T-cell (primary cell): ENCODE measurements at regions of chr12 and their contacts with region 1.

Region 1: DNA sequence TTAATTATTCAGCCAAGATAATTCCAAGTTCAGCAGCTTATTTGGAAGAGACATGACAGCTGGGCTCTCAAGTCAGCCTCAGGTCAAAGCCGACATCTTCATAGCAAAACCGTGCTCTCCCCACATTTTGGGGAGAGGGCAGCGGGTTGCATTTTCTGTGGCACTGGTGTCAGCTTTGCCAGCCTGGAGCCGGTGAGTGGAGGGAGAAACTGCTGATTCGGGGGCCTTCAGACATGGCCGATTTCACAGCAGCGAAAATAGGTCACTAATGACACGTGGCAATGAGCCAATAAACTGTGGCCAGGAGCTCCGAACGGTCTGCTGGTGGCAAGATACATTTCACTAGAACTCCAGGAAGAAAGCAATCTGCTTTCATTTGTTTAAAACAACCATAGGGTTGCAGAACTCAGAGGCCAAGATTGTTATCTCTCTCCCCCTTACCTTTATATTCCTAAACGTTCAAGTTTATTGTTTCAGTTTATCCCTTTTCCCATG is 173.2 kb downstream of the CAND1 start:
- DNase-seq: no peak
- ATAC-seq: no peak
- H3K4me3 ChIP-seq: no peak overlapping the region
- H3K4me3 Mint-ChIP-seq: no peak overlapping the region
- H3K27ac ChIP-seq: no peak overlapping the region
- H3K27ac Mint-ChIP-seq: no peak overlapping the region
- H3K4me1 ChIP-seq: peaks cover 0 to 7% of the 10 kb centered on the region in 2 experiments
- H3K4me1 Mint-ChIP-seq: peaks cover 22 to 31% (median 30%) of the 10 kb centered on the region in 3 donors
- H3K27me3 ChIP-seq: no peaks in the 10 kb centered on the region
- H3K27me3 Mint-ChIP-seq: no peaks in the 10 kb centered on the region

Region 2: DNA sequence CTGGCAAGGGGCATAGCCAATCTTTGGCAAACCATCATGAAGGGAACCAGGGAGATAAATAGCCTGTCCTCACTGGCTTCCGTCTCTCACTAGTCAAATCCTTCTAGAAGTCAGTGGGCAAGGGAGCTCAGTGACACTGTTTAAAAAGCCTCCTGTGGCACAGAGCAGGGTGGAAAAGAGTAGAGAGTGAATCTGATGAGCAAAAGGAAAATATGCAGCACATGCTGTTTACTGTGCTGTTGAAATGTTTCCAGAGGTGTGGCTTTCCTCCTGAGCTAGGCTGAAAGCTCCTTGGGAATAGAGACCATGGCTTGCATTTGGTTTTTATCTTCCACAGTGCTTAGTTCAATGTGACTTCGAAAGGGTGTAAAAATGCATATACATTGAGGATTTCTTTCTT is 198.5 kb after region 1 on chr12:
- CTCF ChIA-PET with region 1: no interaction called
- POLR2A ChIA-PET with region 1: interaction called in 1 of 2 experiments, 10 read pairs
- DNase-seq: no peak
- ATAC-seq: no peak
- H3K4me3 ChIP-seq: no peak overlapping the region
- H3K4me3 Mint-ChIP-seq: no peak overlapping the region
- H3K27ac ChIP-seq: no peak overlapping the region
- H3K27ac Mint-ChIP-seq: peak overlapping the region in 1 of 2 donors; percentile 53
- H3K4me1 ChIP-seq: no peaks in the 10 kb centered on the region
- H3K4me1 Mint-ChIP-seq: peaks cover 4 to 43% (median 20%) of the 10 kb centered on the region in 3 donors
- H3K27me3 ChIP-seq: no peaks in the 10 kb centered on the region
- H3K27me3 Mint-ChIP-seq: no peaks in the 10 kb centered on the region